ENCODE measurements at regions of chr6 and their contacts with region 1.

Region 1: GRCh38 chr6:129672881-129673643 is 36.9 kb downstream of the ARHGAP18 start:
- DNase-seq: no peak
- ATAC-seq: peak; percentile 32
- H3K4me3 ChIP-seq: no peak overlapping the region
- H3K4me3 Mint-ChIP-seq: peak overlapping the region; percentile 17
- H3K27ac ChIP-seq: peak overlapping the region in 1 of 2 donors; percentile 43
- H3K27ac Mint-ChIP-seq: peak overlapping the region; percentile 70
- H3K4me1 ChIP-seq: peaks cover 12 to 14% of the 10 kb centered on the region in 2 donors
- H3K4me1 Mint-ChIP-seq: peaks cover 21% of the 10 kb centered on the region
- H3K27me3 ChIP-seq: no peaks in the 10 kb centered on the region
- H3K27me3 Mint-ChIP-seq: no peaks in the 10 kb centered on the region
- CTCF ChIP-seq: no peak

Region 2: GRCh38 chr6:129233458-129234134 is 439.5 kb before region 1 on chr6:
- CTCF ChIA-PET with region 1: no interaction called
- POLR2A ChIA-PET with region 1: no interaction called
- intact Hi-C with region 1: loop called (anchors 5 kb)
- DNase-seq: peak; percentile 29
- ATAC-seq: peak; percentile 65
- H3K4me3 ChIP-seq: peak overlapping the region in 1 of 5 experiments; percentile 35
- H3K4me3 Mint-ChIP-seq: peak overlapping the region; percentile 48
- H3K27ac ChIP-seq: peak overlapping the region; percentile 26 to 40
- H3K27ac Mint-ChIP-seq: peak overlapping the region; percentile 70
- H3K4me1 ChIP-seq: peaks cover 15 to 18% of the 10 kb centered on the region in 2 donors
- H3K4me1 Mint-ChIP-seq: peaks cover 29% of the 10 kb centered on the region
- H3K27me3 ChIP-seq: no peaks in the 10 kb centered on the region
- H3K27me3 Mint-ChIP-seq: no peaks in the 10 kb centered on the region
- CTCF ChIP-seq: no peak

Region 3: DNA sequence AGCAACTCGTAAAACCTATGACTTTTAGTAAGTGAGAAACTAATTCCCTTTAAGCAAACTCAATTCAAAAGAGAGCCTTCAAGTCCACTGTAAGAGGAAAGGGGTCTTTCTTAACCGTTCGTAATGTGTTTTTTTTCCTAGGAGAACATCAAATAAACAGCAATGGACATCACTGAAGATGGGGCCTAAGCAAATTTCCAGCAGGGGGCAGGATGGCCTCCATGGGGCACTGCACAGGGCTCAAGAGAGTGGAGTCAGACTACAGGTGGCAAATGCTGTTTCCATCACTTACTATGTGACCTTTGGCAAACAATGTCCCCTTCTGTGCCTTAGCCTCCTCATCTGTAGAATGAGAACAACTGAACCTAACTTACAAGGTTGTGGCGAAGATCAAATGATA is 51.8 kb before region 1 on chr6:
- CTCF ChIA-PET with region 1: no interaction called
- POLR2A ChIA-PET with region 1: no interaction called
- intact Hi-C with region 1: loop called (anchors 10 kb)
- DNase-seq: peak; percentile 47
- ATAC-seq: peak; percentile 57
- H3K4me3 ChIP-seq: no peak overlapping the region
- H3K4me3 Mint-ChIP-seq: no peak overlapping the region
- H3K27ac ChIP-seq: no peak overlapping the region
- H3K27ac Mint-ChIP-seq: no peak overlapping the region
- H3K4me1 ChIP-seq: no peaks in the 10 kb centered on the region
- H3K4me1 Mint-ChIP-seq: no peaks in the 10 kb centered on the region
- H3K27me3 ChIP-seq: no peaks in the 10 kb centered on the region
- H3K27me3 Mint-ChIP-seq: no peaks in the 10 kb centered on the region
- CTCF ChIP-seq: peak; percentile 31

Region 4: GRCh38 chr6:129647044-129647443 is 26.0 kb before region 1 on chr6:
- CTCF ChIA-PET with region 1: no interaction called
- POLR2A ChIA-PET with region 1: no interaction called
- intact Hi-C with region 1: no loop called
- DNase-seq: no peak
- ATAC-seq: no peak
- H3K4me3 ChIP-seq: no peak overlapping the region
- H3K4me3 Mint-ChIP-seq: no peak overlapping the region
- H3K27ac ChIP-seq: no peak overlapping the region
- H3K27ac Mint-ChIP-seq: no peak overlapping the region
- H3K4me1 ChIP-seq: no peaks in the 10 kb centered on the region
- H3K4me1 Mint-ChIP-seq: no peaks in the 10 kb centered on the region
- H3K27me3 ChIP-seq: no peaks in the 10 kb centered on the region
- H3K27me3 Mint-ChIP-seq: no peaks in the 10 kb centered on the region
- CTCF ChIP-seq: no peak

Region 5: GRCh38 chr6:129683601-129684322 is 10.7 kb after region 1 on chr6:
- CTCF ChIA-PET with region 1: interaction called, 7 read pairs
- POLR2A ChIA-PET with region 1: no interaction called
- intact Hi-C with region 1: loop called (anchors 1 kb)
- DNase-seq: peak; percentile 73
- ATAC-seq: peak; percentile 98
- H3K4me3 ChIP-seq: no peak overlapping the region
- H3K4me3 Mint-ChIP-seq: peak overlapping the region; percentile 29
- H3K27ac ChIP-seq: peak overlapping the region; percentile 21 to 37
- H3K27ac Mint-ChIP-seq: peak overlapping the region; percentile 51
- H3K4me1 ChIP-seq: peaks cover 40 to 46% of the 10 kb centered on the region in 2 donors
- H3K4me1 Mint-ChIP-seq: peaks cover 47% of the 10 kb centered on the region
- H3K27me3 ChIP-seq: no peaks in the 10 kb centered on the region
- H3K27me3 Mint-ChIP-seq: no peaks in the 10 kb centered on the region
- CTCF ChIP-seq: no peak

Region 6: DNA sequence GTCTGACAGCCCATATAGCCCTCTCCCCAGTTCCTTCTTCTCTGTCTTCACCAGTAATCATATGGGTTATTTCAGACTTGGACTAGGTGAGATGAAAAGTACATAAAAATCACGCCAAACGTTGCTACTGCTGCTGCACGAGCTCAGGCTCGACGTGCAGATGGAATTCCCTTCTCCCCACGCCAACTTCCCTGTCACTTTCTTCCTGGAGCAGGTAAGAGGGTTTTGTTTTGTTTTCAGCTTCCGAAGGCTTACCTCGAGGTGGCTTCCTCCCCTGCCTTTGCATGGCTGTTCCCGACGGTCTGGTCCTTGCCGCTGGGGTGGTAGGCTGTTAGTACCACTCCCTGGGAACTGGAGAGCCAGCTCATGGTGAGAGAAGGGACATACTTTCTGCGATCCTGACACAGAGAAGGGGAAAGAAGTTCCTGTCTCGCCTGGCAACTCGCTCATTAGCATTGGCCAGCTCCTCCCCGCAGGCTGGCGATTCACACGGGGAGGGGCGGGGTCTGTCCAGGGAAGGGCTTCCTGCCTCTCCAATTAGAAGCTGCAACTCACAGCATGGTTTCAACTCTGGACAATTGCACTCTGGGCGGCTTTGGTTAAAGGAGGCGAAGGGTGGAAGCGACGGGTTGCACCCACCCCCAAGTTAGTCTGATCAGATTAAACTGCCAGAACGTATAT is 36.8 kb after region 1 on chr6 and contains the start of gene ARHGAP18:
- CTCF ChIA-PET with region 1: interaction called, 3 read pairs
- POLR2A ChIA-PET with region 1: no interaction called
- intact Hi-C with region 1: loop called (anchors 5 kb)
- DNase-seq: peak; percentile 70
- ATAC-seq: peak; percentile 93
- H3K4me3 ChIP-seq: peak within 1 kb of the TSS; percentile 63 to 95 (median 73)
- H3K4me3 Mint-ChIP-seq: peak within 1 kb of the TSS; percentile 100
- H3K27ac ChIP-seq: peak within 1 kb of the TSS; percentile 50 to 75
- H3K27ac Mint-ChIP-seq: peak within 1 kb of the TSS; percentile 90
- H3K4me1 ChIP-seq: peaks cover 18 to 19% of the 10 kb centered on the region in 2 donors
- H3K4me1 Mint-ChIP-seq: peaks cover 35% of the 10 kb centered on the region
- H3K27me3 ChIP-seq: no peaks in the 10 kb centered on the region
- H3K27me3 Mint-ChIP-seq: no peaks in the 10 kb centered on the region
- CTCF ChIP-seq: no peak
- total RNA-seq, gene ARHGAP18: 3.9 TPM in 2 replicates

Region 7: DNA sequence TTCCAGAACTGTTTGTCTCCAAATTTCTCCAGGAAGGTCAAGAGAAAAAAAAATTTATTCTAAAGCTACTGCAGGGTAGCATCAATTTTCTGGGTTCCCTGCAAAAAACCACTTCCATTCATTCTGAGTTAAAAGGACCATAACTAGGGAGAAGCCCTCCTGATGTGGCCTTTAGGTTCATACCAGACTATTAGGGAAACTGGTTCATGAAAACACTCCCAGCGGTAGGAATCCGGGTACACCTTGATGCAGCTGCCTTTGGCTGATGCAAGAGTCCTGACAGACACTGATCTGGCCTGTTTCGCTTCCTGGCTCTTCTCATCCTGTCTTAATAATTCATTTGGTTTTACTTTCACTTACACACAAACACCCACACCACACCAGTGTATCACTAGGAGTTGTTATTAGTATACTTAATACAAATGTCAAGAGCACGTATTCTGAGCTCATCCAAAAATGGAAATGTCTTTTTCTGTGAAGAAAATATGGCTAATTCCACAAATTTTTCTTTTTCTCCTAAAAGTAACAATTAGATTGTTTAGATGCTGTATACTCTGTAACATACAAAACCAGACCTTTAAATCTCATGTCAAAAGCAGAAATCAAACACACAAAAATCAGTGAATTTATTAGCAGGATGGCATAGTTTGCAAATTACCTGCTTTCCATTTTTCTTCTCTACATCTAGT is 75.3 kb after region 1 on chr6:
- CTCF ChIA-PET with region 1: interaction called, 4 read pairs
- POLR2A ChIA-PET with region 1: no interaction called
- intact Hi-C with region 1: loop called (anchors 2 kb)
- DNase-seq: peak; percentile 78
- ATAC-seq: peak; percentile 90
- H3K4me3 ChIP-seq: peak overlapping the region in 3 of 5 experiments; percentile 24 to 42 (median 24)
- H3K4me3 Mint-ChIP-seq: peak overlapping the region; percentile 70
- H3K27ac ChIP-seq: peak overlapping the region; percentile 70 to 80
- H3K27ac Mint-ChIP-seq: peak overlapping the region; percentile 81
- H3K4me1 ChIP-seq: peaks cover 43 to 46% of the 10 kb centered on the region in 2 donors
- H3K4me1 Mint-ChIP-seq: peaks cover 58% of the 10 kb centered on the region
- H3K27me3 ChIP-seq: no peaks in the 10 kb centered on the region
- H3K27me3 Mint-ChIP-seq: no peaks in the 10 kb centered on the region
- CTCF ChIP-seq: no peak